ENCODE measurements at regions of chr19 and their contacts with region 1.

Region 1: DNA sequence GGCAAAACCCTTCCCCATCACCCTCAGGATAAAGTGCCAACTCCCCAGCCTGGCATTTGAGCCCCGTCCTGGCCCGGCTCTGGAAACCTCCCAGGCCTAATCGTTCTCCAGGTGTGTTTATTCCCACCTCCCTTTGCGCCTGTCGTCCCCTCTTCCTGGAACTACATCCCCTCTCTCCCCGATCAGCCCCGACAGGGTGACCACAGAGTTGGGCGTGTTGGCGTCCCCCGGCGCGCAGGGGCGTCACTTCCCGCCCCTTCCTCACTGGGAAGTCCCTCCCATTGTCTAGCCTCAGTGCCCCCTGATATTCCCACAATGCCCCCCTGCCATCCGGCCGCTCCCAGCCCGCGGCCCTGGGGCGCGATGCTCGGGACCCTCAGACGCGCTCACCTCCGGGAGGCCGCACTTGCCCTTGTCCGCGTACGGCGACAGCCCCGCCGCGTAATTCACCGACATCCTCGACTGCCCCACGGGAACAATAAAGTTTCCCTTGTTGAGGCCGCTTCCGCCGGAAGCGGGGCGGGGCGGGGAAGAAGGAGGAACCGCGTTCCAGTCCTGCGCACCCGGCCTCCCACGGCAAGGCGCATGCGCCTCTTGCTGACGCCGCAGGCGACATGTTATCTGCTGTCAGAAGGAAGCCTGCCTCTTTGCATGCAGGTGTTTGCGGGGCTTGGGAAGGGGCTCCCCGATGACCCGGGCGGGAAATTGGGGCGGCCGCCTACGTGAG is at the starts of genes ANKRD24 and SIRT6:
- DNase-seq: peak; percentile 91 to 98 (median 97)
- ATAC-seq: peak; percentile 88
- H3K4me3 ChIP-seq: peak within 1 kb of the TSS; percentile 79 to 95
- H3K4me3 Mint-ChIP-seq: peak within 1 kb of the TSS; percentile 98
- H3K27ac ChIP-seq: peak within 1 kb of the TSS; percentile 74 to 76
- H3K27ac Mint-ChIP-seq: peak within 1 kb of the TSS; percentile 93
- H3K4me1 ChIP-seq: peaks cover 28% of the 10 kb centered on the region
- H3K4me1 Mint-ChIP-seq: peaks cover 31% of the 10 kb centered on the region
- H3K27me3 ChIP-seq: no peaks in the 10 kb centered on the region
- H3K27me3 Mint-ChIP-seq: peaks cover 2% of the 10 kb centered on the region
- CTCF ChIP-seq: no peak
- total RNA-seq, gene ANKRD24: 0.83 to 1.2 TPM
- total RNA-seq, gene SIRT6: 12.0 to 13.0 TPM

Region 2: DNA sequence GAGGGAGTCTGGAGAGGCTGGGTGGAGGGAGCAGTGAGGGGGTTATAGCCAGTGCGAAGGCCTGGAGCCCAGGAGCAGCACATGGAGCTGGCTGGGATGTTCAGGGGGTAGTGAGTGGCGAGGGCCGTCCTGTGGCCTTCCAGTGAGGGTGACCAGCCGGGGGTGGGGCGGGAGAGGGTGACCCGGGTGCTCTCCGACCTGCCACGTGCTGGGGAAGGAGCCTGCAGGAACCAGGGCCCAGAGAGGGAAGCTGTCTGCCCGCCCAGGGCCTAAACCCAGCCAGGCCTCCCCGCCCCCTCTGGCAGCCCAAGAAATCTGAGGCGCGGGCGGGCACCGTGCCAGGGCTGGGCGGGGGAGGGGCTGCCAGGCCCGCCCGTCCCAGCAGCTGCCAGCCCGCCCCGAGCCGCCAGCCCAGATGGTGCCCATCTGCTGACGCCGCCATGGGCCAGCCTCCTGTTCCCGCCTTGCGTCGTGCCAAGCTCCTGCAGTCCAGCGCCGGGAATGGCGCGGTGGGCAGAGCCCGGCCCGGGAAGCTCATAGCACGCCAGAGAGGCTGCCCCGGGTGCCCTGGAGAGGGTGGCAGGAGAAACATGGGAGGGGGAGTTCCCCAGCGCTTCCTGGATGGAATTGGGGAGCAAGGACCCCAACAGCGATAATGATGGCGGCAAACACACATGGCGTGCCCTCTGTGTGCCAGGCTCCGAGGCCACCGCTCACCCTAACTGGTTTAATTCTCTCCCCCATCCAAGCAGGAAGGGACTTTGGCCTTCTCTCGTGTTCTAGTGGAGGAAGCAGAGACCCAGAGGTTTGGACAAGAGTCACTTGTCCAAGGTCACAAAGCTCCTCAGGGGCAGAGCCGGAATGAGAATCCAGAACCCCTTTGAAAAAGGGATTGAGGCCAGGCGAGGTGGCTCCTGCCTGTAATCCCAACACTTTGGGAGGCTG is 794.3 kb before region 1 on chr19:
- CTCF ChIA-PET with region 1: no interaction called
- POLR2A ChIA-PET with region 1: no interaction called
- intact Hi-C with region 1: no loop called
- DNase-seq: no peak
- ATAC-seq: no peak
- H3K4me3 ChIP-seq: no peak overlapping the region
- H3K4me3 Mint-ChIP-seq: no peak overlapping the region
- H3K27ac ChIP-seq: no peak overlapping the region
- H3K27ac Mint-ChIP-seq: no peak overlapping the region
- H3K4me1 ChIP-seq: no peaks in the 10 kb centered on the region
- H3K4me1 Mint-ChIP-seq: peaks cover 6% of the 10 kb centered on the region
- H3K27me3 ChIP-seq: no peaks in the 10 kb centered on the region
- H3K27me3 Mint-ChIP-seq: no peaks in the 10 kb centered on the region
- CTCF ChIP-seq: no peak

Region 3: DNA sequence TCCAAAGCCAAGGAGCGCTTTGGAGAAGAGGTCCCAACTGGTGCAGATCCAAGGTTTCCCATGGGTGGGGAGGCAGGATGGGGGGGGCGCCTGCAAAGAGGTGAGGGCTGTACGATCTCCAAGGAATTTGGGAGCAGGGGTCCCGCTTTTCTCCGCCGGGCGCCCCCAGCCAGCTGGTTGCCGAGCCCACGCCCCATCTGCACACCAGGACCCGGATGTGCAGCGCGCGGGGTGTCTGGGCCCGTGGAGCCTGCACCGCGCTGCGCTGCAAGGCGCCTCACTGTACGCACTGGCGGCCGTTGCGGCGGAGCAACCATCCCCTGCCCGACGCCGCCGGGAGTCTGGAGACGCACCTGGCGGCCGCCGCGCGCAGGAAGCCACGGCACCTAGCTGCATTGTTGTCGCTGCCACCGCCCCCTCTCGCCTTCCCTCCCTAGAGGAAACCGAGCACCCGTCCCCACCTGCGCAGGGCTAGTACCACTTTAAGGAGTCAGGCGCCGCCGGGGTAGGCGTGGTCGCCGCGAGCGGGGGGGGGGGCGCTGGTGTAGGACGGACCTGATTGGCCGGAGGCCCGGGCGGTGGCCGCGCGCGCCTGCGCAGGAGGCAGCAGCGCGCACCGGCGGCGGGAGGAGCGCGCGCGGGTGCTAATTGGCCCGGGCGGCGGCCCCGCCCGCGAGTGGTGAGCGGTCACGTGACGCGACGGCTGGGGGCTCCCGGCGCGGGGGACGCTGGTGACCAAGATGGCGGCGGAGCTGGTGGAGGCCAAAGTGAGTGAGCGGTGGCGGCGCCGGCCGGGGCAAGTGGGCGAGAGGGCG is 175.0 kb before region 1 on chr19 and contains the start of gene PIAS4:
- CTCF ChIA-PET with region 1: interaction called, 4 read pairs
- POLR2A ChIA-PET with region 1: no interaction called
- intact Hi-C with region 1: loop called (anchors 1 kb)
- DNase-seq: peak; percentile 89 to 99 (median 96)
- ATAC-seq: peak; percentile 91
- H3K4me3 ChIP-seq: peak within 1 kb of the TSS; percentile 68 to 87
- H3K4me3 Mint-ChIP-seq: peak within 1 kb of the TSS; percentile 83
- H3K27ac ChIP-seq: peak within 1 kb of the TSS; percentile 46 to 58
- H3K27ac Mint-ChIP-seq: peak within 1 kb of the TSS; percentile 84
- H3K4me1 ChIP-seq: peaks cover 38% of the 10 kb centered on the region
- H3K4me1 Mint-ChIP-seq: peaks cover 24% of the 10 kb centered on the region
- H3K27me3 ChIP-seq: no peaks in the 10 kb centered on the region
- H3K27me3 Mint-ChIP-seq: no peaks in the 10 kb centered on the region
- CTCF ChIP-seq: no peak
- total RNA-seq, gene PIAS4: 11.6 to 14.9 TPM

Region 4: GRCh38 chr19:4123615-4124568 is 58.4 kb before region 1 on chr19 and contains the start of gene MAP2K2:
- CTCF ChIA-PET with region 1: no interaction called
- POLR2A ChIA-PET with region 1: no interaction called
- intact Hi-C with region 1: loop called in 1 of 2 experiments (anchors 1 kb)
- DNase-seq: peak; percentile 91 to 98 (median 97)
- ATAC-seq: peak; percentile 96
- H3K4me3 ChIP-seq: peak within 1 kb of the TSS; percentile 57 to 72
- H3K4me3 Mint-ChIP-seq: peak within 1 kb of the TSS; percentile 93
- H3K27ac ChIP-seq: peak within 1 kb of the TSS; percentile 52 to 73
- H3K27ac Mint-ChIP-seq: peak within 1 kb of the TSS; percentile 91
- H3K4me1 ChIP-seq: peaks cover 17% of the 10 kb centered on the region
- H3K4me1 Mint-ChIP-seq: peaks cover 25% of the 10 kb centered on the region
- H3K27me3 ChIP-seq: no peaks in the 10 kb centered on the region
- H3K27me3 Mint-ChIP-seq: no peaks in the 10 kb centered on the region
- CTCF ChIP-seq: no peak
- total RNA-seq, gene MAP2K2: 73.9 to 76.8 TPM

Region 5: GRCh38 chr19:4199699-4200293 is 17.5 kb after region 1 on chr19:
- CTCF ChIA-PET with region 1: interaction called, 13 read pairs
- POLR2A ChIA-PET with region 1: no interaction called
- intact Hi-C with region 1: no loop called
- DNase-seq: no peak
- ATAC-seq: no peak
- H3K4me3 ChIP-seq: no peak overlapping the region
- H3K4me3 Mint-ChIP-seq: no peak overlapping the region
- H3K27ac ChIP-seq: no peak overlapping the region
- H3K27ac Mint-ChIP-seq: no peak overlapping the region
- H3K4me1 ChIP-seq: peaks cover 5% of the 10 kb centered on the region
- H3K4me1 Mint-ChIP-seq: peaks cover 12% of the 10 kb centered on the region
- H3K27me3 ChIP-seq: peaks cover 20 to 32% of the 10 kb centered on the region in 2 experiments
- H3K27me3 Mint-ChIP-seq: peaks cover 38% of the 10 kb centered on the region
- CTCF ChIP-seq: no peak

Region 6: GRCh38 chr19:4471403-4472173 is 289.3 kb after region 1 on chr19:
- CTCF ChIA-PET with region 1: no interaction called
- POLR2A ChIA-PET with region 1: no interaction called
- intact Hi-C with region 1: loop called in 1 of 2 experiments (anchors 5 kb)
- DNase-seq: peak; percentile 94 to 100 (median 97)
- ATAC-seq: peak; percentile 85
- H3K4me3 ChIP-seq: peak overlapping the region; percentile 55 to 63
- H3K4me3 Mint-ChIP-seq: no peak overlapping the region
- H3K27ac ChIP-seq: peak overlapping the region; percentile 70 to 72
- H3K27ac Mint-ChIP-seq: no peak overlapping the region
- H3K4me1 ChIP-seq: peaks cover 20% of the 10 kb centered on the region
- H3K4me1 Mint-ChIP-seq: peaks cover 22% of the 10 kb centered on the region
- H3K27me3 ChIP-seq: no peaks in the 10 kb centered on the region
- H3K27me3 Mint-ChIP-seq: no peaks in the 10 kb centered on the region
- CTCF ChIP-seq: no peak